ENCODE measurements at regions of chr14 and their contacts with region 1.

Region 1: GRCh38 chr14:49497725-49498348 is 88.3 kb downstream of the RPS29 start:
- DNase-seq: no peak
- H3K4me3 ChIP-seq: no peak overlapping the region
- H3K27ac ChIP-seq: no peak overlapping the region
- H3K4me1 ChIP-seq: peaks cover 0 to 4% (median 1%) of the 10 kb centered on the region in 4 experiments; a peak in 2 of 7 replicates
- H3K27me3 ChIP-seq: no peaks in the 10 kb centered on the region
- CTCF ChIP-seq: peak in 2 of 3 experiments; percentile 61 to 79; a peak in 2 of 4 replicates
- EP300 ChIP-seq: no peak
- POLR2A ChIP-seq: no peak
- RAD21 ChIP-seq: peak; percentile 94

Region 2: GRCh38 chr14:49483268-49483667 is 14.6 kb before region 1 on chr14:
- CTCF ChIA-PET with region 1: interaction called, 19 read pairs
- POLR2A ChIA-PET with region 1: interaction called, 3 read pairs
- DNase-seq: no peak
- H3K4me3 ChIP-seq: no peak overlapping the region
- H3K27ac ChIP-seq: no peak overlapping the region
- H3K4me1 ChIP-seq: no peaks in the 10 kb centered on the region
- H3K27me3 ChIP-seq: no peaks in the 10 kb centered on the region; a peak in 1 of 7 replicates
- CTCF ChIP-seq: no peak
- EP300 ChIP-seq: no peak
- POLR2A ChIP-seq: no peak
- RAD21 ChIP-seq: no peak

Region 3: DNA sequence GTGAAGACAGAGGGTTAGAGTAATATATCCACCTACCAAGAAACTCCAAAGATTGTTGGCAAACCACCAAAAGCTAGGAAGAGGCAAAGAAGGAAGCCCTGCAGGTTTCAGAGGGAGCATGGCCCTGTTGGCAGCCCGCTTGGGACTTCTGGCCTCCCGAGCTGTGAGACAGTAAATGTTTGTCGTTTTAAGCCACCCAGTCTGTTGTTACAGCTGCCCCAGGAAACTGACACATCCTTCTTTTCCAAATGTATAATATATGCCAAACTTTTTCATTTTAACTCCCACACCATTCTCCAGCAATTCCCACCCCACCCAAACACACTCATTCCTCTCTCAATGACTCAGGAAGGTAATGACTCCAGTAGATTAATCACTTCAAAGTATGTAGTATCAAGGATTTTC is 14.3 kb after region 1 on chr14:
- CTCF ChIA-PET with region 1: interaction called, 40 read pairs
- POLR2A ChIA-PET with region 1: no interaction called
- DNase-seq: no peak
- H3K4me3 ChIP-seq: no peak overlapping the region
- H3K27ac ChIP-seq: no peak overlapping the region
- H3K4me1 ChIP-seq: no peaks in the 10 kb centered on the region
- H3K27me3 ChIP-seq: no peaks in the 10 kb centered on the region
- CTCF ChIP-seq: no peak
- EP300 ChIP-seq: no peak
- POLR2A ChIP-seq: no peak
- RAD21 ChIP-seq: no peak

Region 4: DNA sequence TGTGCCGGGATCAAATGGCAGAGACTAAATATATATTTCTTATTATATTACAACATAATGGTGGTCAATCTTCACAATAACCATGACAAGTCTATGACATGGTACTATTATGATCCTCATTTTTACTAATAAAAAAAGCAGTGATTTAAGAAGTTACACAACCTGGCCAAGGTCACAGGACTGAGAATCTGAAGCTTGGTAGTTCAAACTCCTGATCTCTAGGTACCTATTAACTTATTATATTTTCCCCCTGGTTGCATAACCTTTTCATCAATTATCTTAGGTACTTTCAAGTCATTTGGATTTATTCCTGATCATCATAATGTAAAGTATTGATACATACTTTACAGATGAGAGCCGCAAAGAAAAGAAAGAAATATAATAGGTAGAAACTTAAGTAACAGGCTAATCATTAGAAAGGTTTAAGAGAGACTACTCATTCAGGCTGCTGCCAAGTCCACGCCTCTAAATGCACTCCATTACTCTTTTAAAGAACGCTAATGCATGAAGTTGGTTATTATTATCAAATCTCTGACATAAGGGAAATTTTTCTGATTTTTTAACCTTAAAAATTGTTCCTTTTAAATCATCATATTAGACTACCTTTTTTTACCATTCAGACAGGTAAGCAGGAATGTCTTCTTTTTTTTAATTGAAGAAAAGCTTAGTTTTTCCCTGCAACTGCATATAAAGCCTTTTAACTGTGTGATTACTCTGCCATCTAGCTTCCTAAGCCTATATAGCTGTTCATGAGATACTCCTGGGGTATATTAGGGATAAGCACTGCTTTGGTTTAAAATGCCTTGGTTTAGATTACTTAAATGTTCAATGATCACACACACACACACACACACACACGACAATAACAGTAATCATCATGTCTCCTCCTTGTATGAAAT is 52.7 kb after region 1 on chr14:
- CTCF ChIA-PET with region 1: interaction called, 40 read pairs
- POLR2A ChIA-PET with region 1: no interaction called
- DNase-seq: no peak
- H3K4me3 ChIP-seq: peak overlapping the region in 1 of 4 experiments; percentile 37; a peak in 1 of 8 replicates
- H3K27ac ChIP-seq: no peak overlapping the region
- H3K4me1 ChIP-seq: peaks cover 0 to 9% (median 6%) of the 10 kb centered on the region in 4 experiments; a peak in 3 of 7 replicates
- H3K27me3 ChIP-seq: no peaks in the 10 kb centered on the region
- CTCF ChIP-seq: peak in 2 of 3 experiments; percentile 23 to 55; a peak in 2 of 4 replicates
- EP300 ChIP-seq: no peak
- POLR2A ChIP-seq: no peak
- RAD21 ChIP-seq: peak; percentile 75

Region 5: DNA sequence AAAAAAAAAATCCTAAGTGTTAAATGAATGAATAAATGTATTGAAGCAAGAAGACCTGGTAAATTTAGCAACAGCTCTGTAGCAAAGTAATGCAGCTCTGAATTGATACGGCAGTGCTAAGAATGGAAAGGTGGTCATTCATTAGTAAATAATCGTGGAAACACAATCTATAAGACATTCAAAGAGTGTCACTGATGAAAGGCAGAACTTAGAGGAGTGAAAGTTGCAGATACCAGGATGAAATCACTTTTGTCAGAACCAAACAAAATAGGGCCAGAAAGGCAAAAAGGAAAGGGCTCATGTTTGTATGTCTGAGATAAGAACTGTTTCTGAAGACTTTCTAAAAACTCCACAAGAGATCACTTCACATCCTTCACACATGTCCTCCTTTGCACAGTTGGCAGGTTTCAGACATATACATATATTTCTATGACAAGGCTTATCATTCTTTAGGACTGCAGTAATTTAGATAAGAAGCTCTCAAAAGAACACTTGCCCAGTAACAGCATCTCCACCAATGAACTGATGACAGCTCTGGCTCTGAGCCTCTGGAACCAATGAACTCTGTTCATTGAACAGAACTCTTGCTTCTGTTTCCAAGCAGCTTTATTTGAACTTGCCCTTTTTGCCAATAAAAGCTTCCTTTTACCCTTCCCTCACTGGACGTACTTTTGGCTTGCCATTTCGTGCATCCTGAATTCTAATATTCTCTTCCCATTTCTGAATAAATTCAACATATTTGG is 96.7 kb after region 1 on chr14:
- CTCF ChIA-PET with region 1: no interaction called
- POLR2A ChIA-PET with region 1: no interaction called
- DNase-seq: no peak
- H3K4me3 ChIP-seq: no peak overlapping the region
- H3K27ac ChIP-seq: no peak overlapping the region
- H3K4me1 ChIP-seq: no peaks in the 10 kb centered on the region
- H3K27me3 ChIP-seq: no peaks in the 10 kb centered on the region
- CTCF ChIP-seq: no peak
- EP300 ChIP-seq: no peak
- POLR2A ChIP-seq: no peak
- RAD21 ChIP-seq: no peak

Region 6: DNA sequence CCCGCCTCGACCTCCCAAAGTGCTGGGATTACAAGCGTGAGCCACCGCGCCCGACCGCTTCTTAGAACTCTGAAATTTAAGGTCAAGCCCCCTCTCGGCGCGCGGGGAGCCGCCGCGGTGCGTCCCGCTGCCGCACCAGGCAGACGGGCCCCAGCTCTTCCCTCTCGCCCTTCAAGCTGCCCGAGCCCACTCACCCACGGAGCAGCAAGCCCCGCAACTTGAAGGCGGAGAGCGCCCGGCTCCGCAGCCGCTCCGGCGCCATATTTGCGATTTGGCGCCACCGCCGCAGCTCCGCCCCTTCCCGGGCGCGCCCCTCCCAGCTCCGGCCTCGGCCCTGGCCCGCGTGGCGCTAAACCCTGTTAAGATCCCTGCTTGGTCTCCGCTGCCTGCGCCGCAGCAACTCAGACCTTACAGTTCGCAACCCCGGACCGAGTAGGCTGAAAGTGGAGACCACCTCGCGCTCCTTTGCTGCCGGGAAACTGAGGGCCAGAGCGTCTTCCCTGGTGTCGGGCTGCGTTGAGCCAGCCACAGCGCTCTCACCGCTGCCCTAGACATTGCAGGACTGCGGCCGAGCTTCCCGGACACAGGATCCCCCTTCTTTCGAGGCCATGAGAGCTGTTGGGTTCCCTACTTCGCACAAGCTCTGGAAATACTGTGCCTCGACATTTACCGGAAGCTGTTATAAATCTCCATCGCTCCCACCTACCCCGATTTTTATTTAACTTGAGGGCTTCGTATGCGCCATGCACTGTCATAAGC is 190.3 kb after region 1 on chr14 and contains the start of gene POLE2:
- CTCF ChIA-PET with region 1: no interaction called
- POLR2A ChIA-PET with region 1: no interaction called
- DNase-seq: peak; percentile 57 to 92
- H3K4me3 ChIP-seq: peak within 1 kb of the TSS; percentile 62 to 84 (median 72)
- H3K27ac ChIP-seq: peak within 1 kb of the TSS; percentile 84
- H3K4me1 ChIP-seq: peaks cover 0 to 9% (median 4%) of the 10 kb centered on the region in 4 experiments; a peak in 6 of 7 replicates
- H3K27me3 ChIP-seq: peaks cover 0 to 13% (median 6%) of the 10 kb centered on the region in 4 experiments
- CTCF ChIP-seq: peak in 1 of 3 experiments; percentile 10; a peak in 1 of 4 replicates
- EP300 ChIP-seq: no peak
- POLR2A ChIP-seq: peak; percentile 88 to 92
- RAD21 ChIP-seq: no peak
- total RNA-seq, gene POLE2: 31.2 and 34.0 TPM in 2 replicates